Esophagus muscularis mucosa (tissue), 4 donors: ENCODE measurements at regions of chr12 and their contacts with region 1.

Region 1: GRCh38 chr12:88241862-88242570 is 99.9 kb downstream of the TMTC3 start:
- DNase-seq: no peak
- H3K4me3 ChIP-seq: no peak overlapping the region
- H3K27ac ChIP-seq: peak overlapping the region; percentile 37 to 61 (median 52)
- H3K4me1 ChIP-seq: peaks cover 0 to 28% (median 19%) of the 10 kb centered on the region in 4 donors
- H3K27me3 ChIP-seq: no peaks in the 10 kb centered on the region
- CTCF ChIP-seq: no peak
- EP300 ChIP-seq: no peak
- POLR2A ChIP-seq: no peak

Region 2: GRCh38 chr12:88566171-88566829 is 324.3 kb after region 1 on chr12:
- intact Hi-C with region 1: loop called (anchors 10 kb)
- DNase-seq: no peak
- H3K4me3 ChIP-seq: no peak overlapping the region
- H3K27ac ChIP-seq: peak overlapping the region in 3 of 4 donors; percentile 30 to 59 (median 42)
- H3K4me1 ChIP-seq: peaks cover 38 to 98% (median 86%) of the 10 kb centered on the region in 4 donors
- H3K27me3 ChIP-seq: no peaks in the 10 kb centered on the region
- CTCF ChIP-seq: no peak
- EP300 ChIP-seq: no peak
- POLR2A ChIP-seq: no peak